ENCODE measurements at regions of chr5 and their contacts with region 1.

Region 1: DNA sequence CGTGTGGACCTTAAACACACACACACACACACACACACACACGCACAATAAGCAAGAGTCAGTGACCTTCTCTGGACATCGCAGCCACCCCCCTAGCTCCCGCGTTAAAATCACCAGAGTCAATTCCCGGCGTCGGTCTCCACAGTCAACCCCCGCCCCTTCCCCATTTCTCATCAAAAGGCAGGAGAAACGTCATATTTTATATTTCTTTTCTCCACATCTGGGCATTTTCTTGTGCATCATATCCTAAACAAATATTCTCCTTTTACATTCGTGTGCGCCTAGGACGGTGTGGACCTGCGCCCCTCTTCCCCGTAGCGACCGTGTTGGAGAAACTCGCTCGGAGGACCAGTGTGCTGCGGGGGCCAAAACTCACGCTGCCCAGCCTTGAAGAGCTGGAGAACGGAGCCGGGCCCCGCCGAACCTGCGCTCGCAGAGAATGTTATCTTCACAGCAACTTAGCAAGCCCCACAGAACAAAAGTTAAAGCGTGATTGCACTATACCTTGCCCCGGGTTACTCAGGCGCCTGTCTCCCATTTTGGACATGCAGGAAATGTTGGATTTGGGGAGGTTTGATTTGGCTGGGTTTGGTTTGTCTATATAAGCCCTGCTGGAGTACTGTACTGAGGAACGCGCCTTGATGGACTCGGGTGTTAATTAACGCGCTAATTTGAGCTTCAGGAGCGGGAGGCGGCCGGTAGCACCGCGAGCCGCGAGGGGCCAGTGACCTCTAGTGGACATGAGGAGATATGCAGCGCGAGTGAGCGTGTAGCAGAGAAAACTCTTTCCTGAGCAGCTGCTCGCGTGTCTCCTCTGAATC is 192.4 kb downstream of the MEF2C start:
- DNase-seq: peak in 1 of 2 experiments; percentile 85
- H3K4me3 ChIP-seq: peak overlapping the region in 3 of 4 experiments; percentile 5 to 54 (median 7); a peak in 4 of 8 replicates
- H3K27ac ChIP-seq: no peak overlapping the region
- H3K4me1 ChIP-seq: peaks cover 30 to 36% (median 34%) of the 10 kb centered on the region in 4 experiments
- H3K27me3 ChIP-seq: peaks cover 91 to 100% (median 98%) of the 10 kb centered on the region in 4 experiments
- CTCF ChIP-seq: peak; percentile 79 to 95 (median 95)
- EP300 ChIP-seq: no peak
- POLR2A ChIP-seq: no peak
- RAD21 ChIP-seq: peak; percentile 95

Region 2: DNA sequence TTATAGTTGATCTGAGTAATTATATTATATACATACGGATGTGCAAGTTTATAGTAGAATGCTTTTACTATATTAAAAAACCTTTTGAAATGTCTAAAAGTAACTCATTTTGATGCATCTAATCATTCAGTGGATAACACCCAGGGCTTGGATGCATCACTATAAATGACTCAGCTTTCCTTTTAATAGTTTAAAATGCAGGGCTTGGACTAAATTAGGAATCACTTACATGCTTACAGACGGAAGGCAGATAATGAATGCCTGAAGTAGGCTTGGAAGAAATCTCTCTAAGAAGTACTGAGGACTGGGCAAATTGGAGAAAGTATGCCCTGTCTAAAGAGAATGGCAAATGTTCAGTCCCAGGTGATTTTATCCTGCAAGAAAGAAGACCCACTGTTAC is 915.4 kb before region 1 on chr5:
- CTCF ChIA-PET with region 1: interaction called, 50 read pairs
- POLR2A ChIA-PET with region 1: no interaction called
- DNase-seq: no peak
- H3K4me3 ChIP-seq: no peak overlapping the region
- H3K27ac ChIP-seq: no peak overlapping the region
- H3K4me1 ChIP-seq: peaks cover 0 to 6% (median 1%) of the 10 kb centered on the region in 4 experiments; a peak in 2 of 7 replicates
- H3K27me3 ChIP-seq: no peaks in the 10 kb centered on the region; a peak in 1 of 7 replicates
- CTCF ChIP-seq: no peak
- EP300 ChIP-seq: no peak
- POLR2A ChIP-seq: no peak
- RAD21 ChIP-seq: no peak

Region 3: GRCh38 chr5:88145611-88146467 is 544.8 kb before region 1 on chr5:
- CTCF ChIA-PET with region 1: interaction called, 13 read pairs
- POLR2A ChIA-PET with region 1: no interaction called
- DNase-seq: peak in 1 of 2 experiments; percentile 52
- H3K4me3 ChIP-seq: peak overlapping the region; percentile 21 to 55 (median 30); a peak in 6 of 8 replicates
- H3K27ac ChIP-seq: no peak overlapping the region
- H3K4me1 ChIP-seq: peaks cover 4 to 23% (median 17%) of the 10 kb centered on the region in 4 experiments
- H3K27me3 ChIP-seq: peaks cover 31 to 55% (median 48%) of the 10 kb centered on the region in 4 experiments
- CTCF ChIP-seq: no peak
- EP300 ChIP-seq: no peak
- POLR2A ChIP-seq: no peak
- RAD21 ChIP-seq: peak; percentile 1 to 17; a peak in 1 of 4 replicates

Region 4: GRCh38 chr5:88551724-88552345 is 138.8 kb before region 1 on chr5:
- CTCF ChIA-PET with region 1: no interaction called
- POLR2A ChIA-PET with region 1: no interaction called
- DNase-seq: no peak
- H3K4me3 ChIP-seq: no peak overlapping the region
- H3K27ac ChIP-seq: no peak overlapping the region
- H3K4me1 ChIP-seq: peaks cover 0 to 2% (median 0%) of the 10 kb centered on the region in 4 experiments; a peak in 2 of 7 replicates
- H3K27me3 ChIP-seq: no peaks in the 10 kb centered on the region
- CTCF ChIP-seq: no peak
- EP300 ChIP-seq: no peak
- POLR2A ChIP-seq: no peak
- RAD21 ChIP-seq: no peak

Region 5: DNA sequence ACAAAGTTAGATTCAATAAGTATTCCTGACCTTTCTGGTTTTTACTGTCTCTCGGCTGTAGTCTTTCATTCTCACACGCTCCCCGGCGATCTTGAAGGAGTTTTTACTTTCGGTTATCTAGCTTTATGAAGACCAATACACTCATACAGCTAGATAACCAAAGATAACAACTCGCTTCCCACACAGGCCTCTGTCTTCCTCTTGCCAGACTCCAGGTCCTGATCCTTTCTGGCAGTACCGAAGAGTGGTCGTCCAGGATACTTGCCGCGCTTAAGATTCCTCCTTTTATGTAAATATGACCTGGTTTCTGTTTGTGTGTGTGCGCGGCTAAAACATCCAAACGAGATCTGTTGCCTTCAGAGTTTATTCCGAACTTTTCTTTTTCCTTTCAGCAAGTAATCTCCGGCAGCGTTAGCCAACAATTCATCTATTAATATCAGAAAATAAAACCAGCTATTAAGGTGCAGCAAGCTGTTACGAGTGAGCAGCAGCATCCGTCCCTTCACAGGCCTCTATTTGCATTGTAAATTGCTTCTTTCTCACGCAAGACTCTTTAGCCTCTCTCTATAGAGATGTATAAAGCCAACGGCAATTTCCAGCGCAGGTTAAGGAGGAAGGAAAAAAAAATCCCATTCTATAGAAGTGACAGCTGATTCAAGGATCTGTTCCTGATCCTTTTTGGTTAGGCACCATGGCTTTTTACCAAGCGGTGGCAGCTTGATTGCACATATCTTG is 23.7 kb before region 1 on chr5:
- CTCF ChIA-PET with region 1: interaction called, 24 read pairs
- POLR2A ChIA-PET with region 1: interaction called, 8 read pairs
- DNase-seq: no peak
- H3K4me3 ChIP-seq: peak overlapping the region in 3 of 4 experiments; percentile 4 to 50 (median 17); a peak in 5 of 8 replicates
- H3K27ac ChIP-seq: no peak overlapping the region
- H3K4me1 ChIP-seq: peaks cover 10 to 30% (median 21%) of the 10 kb centered on the region in 4 experiments
- H3K27me3 ChIP-seq: peaks cover 42 to 83% (median 62%) of the 10 kb centered on the region in 4 experiments
- CTCF ChIP-seq: no peak
- EP300 ChIP-seq: peak in 1 of 2 experiments; percentile 72; a peak in 1 of 3 replicates
- POLR2A ChIP-seq: no peak
- RAD21 ChIP-seq: no peak

Region 6: GRCh38 chr5:88680253-88681132 is 10.1 kb before region 1 on chr5:
- CTCF ChIA-PET with region 1: interaction called, 63 read pairs
- POLR2A ChIA-PET with region 1: interaction called, 13 read pairs
- DNase-seq: peak in 1 of 2 experiments; percentile 97
- H3K4me3 ChIP-seq: peak overlapping the region; percentile 6 to 58 (median 31); a peak in 7 of 8 replicates
- H3K27ac ChIP-seq: no peak overlapping the region
- H3K4me1 ChIP-seq: peaks cover 10 to 26% (median 15%) of the 10 kb centered on the region in 4 experiments
- H3K27me3 ChIP-seq: peaks cover 58 to 96% (median 81%) of the 10 kb centered on the region in 4 experiments
- CTCF ChIP-seq: peak; percentile 76 to 93 (median 88)
- EP300 ChIP-seq: no peak
- POLR2A ChIP-seq: no peak
- RAD21 ChIP-seq: peak; percentile 93 to 94

Region 7: DNA sequence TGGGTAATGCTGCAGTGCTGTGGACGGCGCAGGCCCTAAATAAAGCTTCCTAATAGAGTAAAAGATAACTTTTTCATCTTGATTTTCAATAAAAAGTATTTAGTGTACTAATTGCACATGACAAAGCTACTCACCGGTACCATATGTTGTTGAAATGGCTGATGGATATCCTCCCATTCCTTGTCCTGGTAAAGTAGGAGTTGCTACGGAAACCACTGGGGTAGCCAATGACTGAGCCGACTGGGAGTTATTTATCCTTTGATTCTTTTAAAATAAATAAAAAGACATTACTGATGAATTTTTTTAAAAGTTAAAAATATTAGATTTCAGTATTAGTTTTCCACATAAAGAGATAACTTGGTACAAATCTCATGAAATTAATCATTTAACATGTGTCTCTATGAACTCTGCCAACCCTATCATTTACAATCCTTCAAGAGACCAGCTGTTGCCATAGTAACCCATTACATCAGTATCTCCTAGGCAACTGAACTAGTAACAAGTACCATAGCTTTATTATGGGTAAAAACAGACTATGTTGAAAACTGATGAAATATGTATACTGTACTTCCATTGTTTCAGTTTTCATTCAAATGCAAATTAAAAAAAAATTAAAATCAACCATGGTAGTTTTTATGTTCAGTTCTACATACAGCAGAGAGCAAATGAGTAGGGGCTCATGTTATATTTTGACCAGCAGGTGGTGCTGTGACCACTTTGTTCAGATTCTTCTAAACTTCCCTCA is 38.6 kb after region 1 on chr5:
- CTCF ChIA-PET with region 1: interaction called, 86 read pairs
- POLR2A ChIA-PET with region 1: no interaction called
- DNase-seq: peak in 1 of 2 experiments; percentile 67
- H3K4me3 ChIP-seq: no peak overlapping the region
- H3K27ac ChIP-seq: no peak overlapping the region
- H3K4me1 ChIP-seq: peaks cover 0 to 4% (median 0%) of the 10 kb centered on the region in 4 experiments; a peak in 1 of 7 replicates
- H3K27me3 ChIP-seq: no peaks in the 10 kb centered on the region
- CTCF ChIP-seq: peak in 2 of 3 experiments; percentile 50 to 61; a peak in 2 of 4 replicates
- EP300 ChIP-seq: no peak
- POLR2A ChIP-seq: no peak
- RAD21 ChIP-seq: peak; percentile 91 to 93

Region 8: GRCh38 chr5:88746438-88746882 is 55.8 kb after region 1 on chr5:
- CTCF ChIA-PET with region 1: no interaction called
- POLR2A ChIA-PET with region 1: no interaction called
- DNase-seq: no peak
- H3K4me3 ChIP-seq: no peak overlapping the region
- H3K27ac ChIP-seq: no peak overlapping the region
- H3K4me1 ChIP-seq: no peaks in the 10 kb centered on the region
- H3K27me3 ChIP-seq: no peaks in the 10 kb centered on the region
- CTCF ChIP-seq: no peak
- EP300 ChIP-seq: no peak
- POLR2A ChIP-seq: no peak
- RAD21 ChIP-seq: no peak

Measured in H1 (cell line).